Thyroid gland (tissue), 4 donors: ENCODE measurements at regions of chr6 and their contacts with region 1.

Region 1: GRCh38 chr6:63764318-63764916 is 128.8 kb downstream of the PHF3 start:
- DNase-seq: no peak
- H3K4me3 ChIP-seq: no peak overlapping the region
- H3K27ac ChIP-seq: no peak overlapping the region
- H3K4me1 ChIP-seq: no peaks in the 10 kb centered on the region
- H3K27me3 ChIP-seq: no peaks in the 10 kb centered on the region
- CTCF ChIP-seq: peak in 4 of 6 experiments; percentile 49 to 67 (median 60)
- POLR2A ChIP-seq: no peak

Region 2: DNA sequence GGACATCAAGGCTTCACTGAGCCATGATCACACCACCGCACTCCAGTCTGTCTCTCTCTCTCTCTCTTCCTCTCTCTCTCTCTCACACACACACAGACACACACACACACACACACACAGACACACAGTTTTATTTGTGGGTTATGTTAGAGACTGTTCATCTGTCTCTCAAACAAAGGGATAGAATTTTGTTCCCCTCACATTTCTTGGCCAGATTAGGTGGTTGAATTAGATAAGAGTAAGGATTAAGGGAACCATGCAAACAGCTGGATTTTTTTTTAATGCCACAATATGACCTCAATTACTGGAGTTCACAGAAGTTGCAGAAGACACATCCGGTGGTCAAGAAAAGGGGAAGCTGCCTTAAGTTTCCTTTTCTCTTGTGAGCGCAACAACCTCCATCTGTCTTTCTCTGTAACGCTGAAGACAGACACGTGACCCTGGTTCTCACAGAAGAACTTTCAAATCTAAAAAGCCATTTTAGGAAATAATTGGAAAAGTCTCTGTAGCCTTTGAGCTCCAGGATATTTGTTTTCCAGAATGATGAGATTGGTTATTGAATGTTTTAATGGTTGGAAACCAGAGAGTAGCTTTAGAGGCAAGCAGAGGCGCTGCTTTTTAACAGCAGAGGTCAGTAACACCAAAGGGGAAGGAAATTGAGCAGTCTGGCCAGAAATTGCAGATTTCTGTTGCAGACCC is 411.7 kb before region 1 on chr6:
- intact Hi-C with region 1: loop called (anchors 5 kb)
- DNase-seq: peak; percentile 35 to 36
- H3K4me3 ChIP-seq: no peak overlapping the region
- H3K27ac ChIP-seq: no peak overlapping the region
- H3K4me1 ChIP-seq: peaks cover 0 to 4% of the 10 kb centered on the region in 2 donors
- H3K27me3 ChIP-seq: no peaks in the 10 kb centered on the region
- CTCF ChIP-seq: peak in 5 of 6 experiments; percentile 27 to 73 (median 62)
- POLR2A ChIP-seq: no peak

Region 3: DNA sequence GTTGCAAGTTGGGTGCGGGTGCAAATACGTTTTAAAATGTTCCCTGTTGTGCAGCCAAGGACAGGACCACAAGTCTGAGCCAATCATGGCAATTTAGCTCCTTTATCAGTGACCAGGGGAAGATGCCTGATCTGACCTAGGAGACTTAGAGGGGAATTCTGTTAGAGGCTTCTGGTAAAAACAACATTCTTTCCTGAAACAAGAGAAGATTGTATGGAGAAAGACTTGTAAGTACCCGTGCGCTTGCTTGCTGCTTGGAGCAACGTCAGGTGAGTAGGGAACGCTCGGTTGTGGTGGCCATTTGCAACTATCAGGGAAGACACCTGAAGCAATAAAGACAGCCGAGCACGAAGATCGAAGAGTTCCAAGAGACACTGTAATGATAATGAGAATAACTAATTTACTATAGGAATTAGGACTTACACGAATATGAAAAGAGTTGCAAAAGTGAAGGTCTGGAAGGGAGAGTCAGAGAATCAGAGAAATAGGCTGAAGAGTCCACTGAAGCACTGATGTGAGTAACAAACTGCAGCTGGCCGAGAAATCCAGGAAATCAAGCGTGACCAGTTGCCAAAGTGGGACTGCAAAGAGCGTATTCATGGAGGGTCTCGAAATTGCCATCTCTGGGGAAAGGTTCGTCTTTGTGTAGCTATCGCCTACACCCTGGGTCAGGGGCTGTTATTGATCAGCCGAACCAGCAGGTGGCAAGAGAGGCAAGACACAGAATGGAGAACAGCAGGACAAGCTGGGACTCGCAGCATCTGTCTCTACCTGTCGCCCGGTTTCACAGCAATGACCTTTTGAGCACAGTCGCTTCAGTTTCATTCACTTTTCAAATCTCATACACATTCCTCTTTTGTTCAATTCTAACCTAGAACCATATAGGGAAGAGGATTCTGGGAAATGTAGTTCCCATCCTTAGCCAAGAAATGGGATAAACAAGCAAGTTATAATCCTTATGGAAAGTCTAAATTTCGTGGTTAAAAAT is 166.1 kb before region 1 on chr6:
- intact Hi-C with region 1: loop called (anchors 2 kb)
- DNase-seq: peak; percentile 68 to 74
- H3K4me3 ChIP-seq: peak overlapping the region in 2 of 3 donors; percentile 19 to 31
- H3K27ac ChIP-seq: no peak overlapping the region
- H3K4me1 ChIP-seq: peaks cover 0 to 6% of the 10 kb centered on the region in 2 donors
- H3K27me3 ChIP-seq: no peaks in the 10 kb centered on the region
- CTCF ChIP-seq: peak; percentile 33 to 92 (median 84)
- POLR2A ChIP-seq: no peak